ENCODE measurements at regions of chr1 and their contacts with region 1.

Region 1: DNA sequence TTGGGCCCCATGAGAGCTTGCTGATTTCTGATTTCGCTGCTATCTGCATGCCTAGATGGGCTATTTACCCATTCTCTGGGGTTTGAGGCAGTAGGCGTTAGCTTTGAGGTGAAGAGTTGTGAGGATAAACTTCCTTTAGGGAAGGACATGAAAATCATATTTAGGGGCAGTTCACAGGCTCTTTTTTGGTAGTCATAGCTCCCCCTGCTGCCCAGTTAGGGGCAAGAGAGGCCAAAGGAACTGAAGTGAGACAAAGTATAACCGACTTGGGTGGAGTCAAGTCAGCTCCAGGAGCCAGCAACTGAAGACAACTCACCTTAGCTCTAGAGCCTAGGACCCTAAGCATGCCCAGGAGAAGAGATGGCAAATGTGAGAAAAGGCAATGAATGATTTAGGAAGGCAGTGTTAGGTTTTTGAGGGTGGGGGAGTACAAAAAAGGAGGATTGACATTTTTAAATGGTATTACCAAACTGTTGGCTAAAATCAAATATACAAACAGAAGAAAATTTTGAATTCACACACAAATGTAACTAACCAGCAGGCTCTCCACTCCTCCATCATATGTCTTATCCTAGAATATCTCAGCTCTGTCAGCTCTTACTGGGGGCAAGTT is 625.2 kb downstream of the LMO4 start:
- DNase-seq: peak; percentile 64
- H3K4me3 Mint-ChIP-seq: no peak overlapping the region
- H3K27ac Mint-ChIP-seq: no peak overlapping the region
- H3K4me1 Mint-ChIP-seq: no peaks in the 10 kb centered on the region
- H3K27me3 Mint-ChIP-seq: peaks cover 16% of the 10 kb centered on the region

Region 2: GRCh38 chr1:87292684-87293493 is 660.9 kb before region 1 on chr1:
- CTCF ChIA-PET with region 1: interaction called, 26 read pairs
- DNase-seq: peak; percentile 69
- H3K4me3 Mint-ChIP-seq: no peak overlapping the region
- H3K27ac Mint-ChIP-seq: no peak overlapping the region
- H3K4me1 Mint-ChIP-seq: no peaks in the 10 kb centered on the region
- H3K27me3 Mint-ChIP-seq: peaks cover 3% of the 10 kb centered on the region

Region 3: DNA sequence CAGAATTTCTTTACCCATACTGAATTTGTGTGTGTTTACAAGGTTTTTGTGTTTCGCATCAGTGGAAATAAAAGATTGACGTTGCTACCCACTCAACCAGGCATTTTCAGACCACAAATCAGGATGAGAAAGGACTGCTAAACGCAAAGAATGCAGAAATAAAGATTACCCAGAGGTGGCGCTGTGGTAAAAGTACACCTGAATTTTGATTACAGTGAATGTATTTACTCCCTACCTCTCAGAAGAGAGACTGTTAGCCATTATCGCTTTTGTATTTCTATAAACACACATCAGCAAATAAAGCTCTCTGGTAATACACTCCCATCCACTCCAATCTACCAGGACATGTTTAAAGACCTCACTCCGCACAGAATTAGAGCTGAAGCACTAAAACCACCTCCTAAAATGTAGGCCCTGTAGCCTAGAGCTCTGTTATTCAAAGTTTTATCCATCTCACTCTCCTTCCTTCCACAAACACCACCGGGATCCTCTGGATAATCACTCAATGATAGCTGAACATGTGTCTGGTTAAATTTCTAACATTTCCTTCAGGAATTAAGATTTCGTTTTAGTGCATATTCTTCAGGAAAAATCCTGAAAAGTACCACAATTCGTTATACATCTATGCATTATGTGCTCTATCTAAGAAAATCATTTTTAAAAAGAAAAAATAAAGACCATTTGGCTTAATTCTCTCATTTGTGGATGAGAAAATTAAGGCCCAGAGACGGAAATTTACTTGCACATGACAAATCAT is 627.7 kb before region 1 on chr1:
- CTCF ChIA-PET with region 1: interaction called, 16 read pairs
- DNase-seq: peak; percentile 61
- H3K4me3 Mint-ChIP-seq: no peak overlapping the region
- H3K27ac Mint-ChIP-seq: no peak overlapping the region
- H3K4me1 Mint-ChIP-seq: peaks cover 26% of the 10 kb centered on the region
- H3K27me3 Mint-ChIP-seq: peaks cover 15% of the 10 kb centered on the region

Region 4: GRCh38 chr1:88118176-88118845 is 164.5 kb after region 1 on chr1:
- CTCF ChIA-PET with region 1: no interaction called
- DNase-seq: no peak
- H3K4me3 Mint-ChIP-seq: no peak overlapping the region
- H3K27ac Mint-ChIP-seq: no peak overlapping the region
- H3K4me1 Mint-ChIP-seq: no peaks in the 10 kb centered on the region
- H3K27me3 Mint-ChIP-seq: no peaks in the 10 kb centered on the region